ENCODE measurements at regions of chr12 and their contacts with region 1.

Region 1: DNA sequence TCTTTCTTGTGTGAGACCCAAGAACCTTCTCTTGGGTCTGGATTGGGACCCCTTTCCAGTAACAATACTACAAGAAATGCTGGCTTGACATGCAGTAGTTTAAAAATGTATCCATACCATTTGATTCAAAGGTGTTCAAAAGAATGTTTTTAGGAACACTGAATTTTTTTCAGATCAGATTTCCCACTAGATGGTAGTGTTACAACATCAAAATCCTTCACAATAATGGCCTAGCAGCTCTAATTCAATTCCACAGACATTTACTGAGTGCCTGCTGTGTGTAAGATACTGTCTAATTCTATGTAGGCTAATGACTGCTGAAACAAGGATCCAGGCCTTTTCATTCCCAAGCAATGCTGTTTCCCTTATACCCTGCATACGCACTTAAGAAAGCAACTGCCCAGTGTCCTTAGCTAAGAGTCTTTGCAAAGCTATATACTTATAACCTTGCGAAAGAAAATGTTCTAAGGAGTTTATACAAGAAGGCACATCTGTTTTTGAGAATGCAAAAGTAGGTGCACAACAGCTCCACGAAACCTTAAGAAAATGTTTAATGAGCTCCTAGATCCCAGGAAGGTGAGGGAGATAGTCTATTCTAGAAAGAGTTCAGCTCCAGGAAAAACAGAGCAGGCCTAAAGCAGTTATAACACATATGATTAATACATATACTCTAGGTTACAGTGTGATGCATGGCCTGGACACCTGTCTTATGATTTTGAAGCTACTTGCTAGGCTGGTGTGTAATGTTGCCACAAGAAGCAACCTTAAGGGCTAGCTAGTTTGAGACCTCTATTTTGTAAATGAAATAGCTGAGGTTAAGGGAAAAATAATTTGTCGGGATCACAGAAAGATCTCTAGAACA is 50.9 kb upstream of the PKP2 start:
- H3K4me3 ChIP-seq: no peak overlapping the region
- H3K27ac ChIP-seq: no peak overlapping the region
- H3K4me1 ChIP-seq: no peaks in the 10 kb centered on the region
- CTCF ChIP-seq: 0 out of 2 replicates have a peak, but pooled peaks have one; percentile 13

Region 2: DNA sequence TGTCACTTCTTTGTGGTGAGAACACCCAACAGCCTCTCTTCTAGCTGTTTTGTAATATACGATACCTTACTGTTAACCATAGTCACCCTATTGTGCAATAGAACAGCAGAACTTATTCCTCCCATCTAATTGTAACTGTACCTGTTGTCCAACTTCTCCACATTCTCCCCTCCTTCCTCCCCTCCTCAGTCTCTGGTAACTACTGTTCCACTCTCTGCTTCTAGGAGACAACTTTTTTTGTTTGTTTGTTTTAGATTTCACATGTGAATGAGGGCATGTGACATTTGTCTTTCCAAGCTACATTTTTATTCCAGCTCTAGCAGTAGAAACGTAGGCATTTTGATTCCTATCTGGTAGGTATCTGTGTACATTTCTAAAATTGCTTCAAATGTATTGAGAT is 146.2 kb after region 1 on chr12:
- CTCF ChIA-PET with region 1: no interaction called
- POLR2A ChIA-PET with region 1: no interaction called
- H3K4me3 ChIP-seq: no peak overlapping the region
- H3K27ac ChIP-seq: no peak overlapping the region
- H3K4me1 ChIP-seq: no peaks in the 10 kb centered on the region
- CTCF ChIP-seq: no peak

Region 3: GRCh38 chr12:34022079-34022830 is 1074.8 kb after region 1 on chr12 and contains the start of gene ALG10:
- CTCF ChIA-PET with region 1: interaction called, 8 read pairs
- POLR2A ChIA-PET with region 1: interaction called, 11 read pairs
- H3K4me3 ChIP-seq: peak within 1 kb of the TSS; percentile 87
- H3K27ac ChIP-seq: peak within 1 kb of the TSS; percentile 74
- H3K4me1 ChIP-seq: no peaks in the 10 kb centered on the region
- CTCF ChIP-seq: peak; percentile 34; the same call in 1 of the 2 replicates